ENCODE measurements at regions of chr6 and their contacts with region 1.

Region 1: DNA sequence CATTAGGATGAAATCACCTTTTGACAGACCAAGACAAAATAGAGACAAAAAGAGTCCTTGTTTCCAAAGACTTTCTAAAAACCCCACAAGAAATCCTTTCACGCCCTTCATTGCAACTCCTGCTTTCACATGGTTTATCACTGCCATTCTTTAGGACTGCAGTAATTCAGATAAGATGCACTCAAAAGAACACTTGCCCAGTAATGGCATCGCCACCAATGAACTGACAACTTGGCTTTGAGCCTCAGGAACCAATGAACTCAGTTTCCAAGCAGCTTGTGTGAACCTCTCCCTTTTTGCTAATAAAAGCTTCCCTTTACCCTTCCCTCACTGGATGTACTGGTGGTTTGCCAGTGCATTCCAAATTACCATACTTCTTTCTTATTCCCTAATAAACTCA is 21.8 kb downstream of the OSTM1 start:
- DNase-seq: no peak
- H3K4me3 ChIP-seq: no peak overlapping the region
- H3K27ac ChIP-seq: no peak overlapping the region
- H3K4me1 ChIP-seq: no peaks in the 10 kb centered on the region
- H3K27me3 ChIP-seq: no peaks in the 10 kb centered on the region
- CTCF ChIP-seq: no peak

Region 2: GRCh38 chr6:107674995-107675738 is 377.5 kb before region 1 on chr6:
- CTCF ChIA-PET with region 1: interaction called, 4 read pairs
- POLR2A ChIA-PET with region 1: no interaction called
- intact Hi-C with region 1: loop called (anchors 10 kb)
- DNase-seq: peak; percentile 86
- H3K4me3 ChIP-seq: no peak overlapping the region
- H3K27ac ChIP-seq: no peak overlapping the region
- H3K4me1 ChIP-seq: no peaks in the 10 kb centered on the region
- H3K27me3 ChIP-seq: no peaks in the 10 kb centered on the region
- CTCF ChIP-seq: peak; percentile 88; the same call in 1 of the 2 replicates

Region 3: GRCh38 chr6:107977283-107977682 is 75.4 kb before region 1 on chr6:
- CTCF ChIA-PET with region 1: interaction called, 6 read pairs
- POLR2A ChIA-PET with region 1: no interaction called
- intact Hi-C with region 1: loop called (anchors 1 kb)
- DNase-seq: peak; percentile 67
- H3K4me3 ChIP-seq: no peak overlapping the region
- H3K27ac ChIP-seq: no peak overlapping the region
- H3K4me1 ChIP-seq: no peaks in the 10 kb centered on the region
- H3K27me3 ChIP-seq: peaks cover 13% of the 10 kb centered on the region
- CTCF ChIP-seq: peak; percentile 60

Region 4: GRCh38 chr6:108699290-108700041 is 646.8 kb after region 1 on chr6:
- CTCF ChIA-PET with region 1: no interaction called
- POLR2A ChIA-PET with region 1: interaction called, 10 read pairs
- intact Hi-C with region 1: no loop called
- DNase-seq: peak; percentile 91
- H3K4me3 ChIP-seq: no peak overlapping the region
- H3K27ac ChIP-seq: peak overlapping the region; percentile 49
- H3K4me1 ChIP-seq: peaks cover 14% of the 10 kb centered on the region
- H3K27me3 ChIP-seq: no peaks in the 10 kb centered on the region
- CTCF ChIP-seq: no peak